ENCODE measurements at regions of chr15 and their contacts with region 1.

Region 1: DNA sequence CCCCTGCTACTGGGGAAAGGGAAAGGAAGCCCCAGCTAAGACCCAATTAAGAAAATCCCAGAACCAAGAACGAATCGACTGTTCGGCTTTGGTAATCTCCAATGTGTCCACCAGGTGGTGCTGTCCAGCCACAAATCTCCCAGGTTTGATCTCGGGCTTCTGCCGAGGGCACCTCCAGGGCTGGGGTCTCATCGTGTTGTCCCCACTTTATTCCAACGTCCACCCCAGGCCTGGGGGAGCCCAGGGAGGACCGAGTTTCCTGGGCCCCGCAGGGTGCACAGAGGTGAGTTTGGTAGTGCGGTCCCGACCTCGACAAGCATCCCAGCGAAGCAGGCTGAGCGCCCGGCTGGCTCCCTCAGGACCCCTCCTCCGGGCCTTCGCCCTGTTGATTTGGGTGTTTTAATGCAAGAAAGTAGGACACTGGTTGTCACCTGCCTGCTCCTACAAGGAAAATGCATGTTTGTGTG is 185.1 kb downstream of the GOLGA6L6 start:
- DNase-seq: peak; percentile 40
- H3K4me3 ChIP-seq: no peak overlapping the region
- H3K27ac ChIP-seq: no peak overlapping the region
- H3K4me1 ChIP-seq: peaks cover 0 to 3% (median 0%) of the 10 kb centered on the region in 4 donors
- H3K27me3 ChIP-seq: no peaks in the 10 kb centered on the region
- CTCF ChIP-seq: peak; percentile 63 to 73 (median 67)
- EP300 ChIP-seq: no peak
- POLR2A ChIP-seq: no peak

Region 2: GRCh38 chr15:20272422-20273184 is 83.9 kb before region 1 on chr15:
- in situ Hi-C with region 1: loop called in 1 of 4 experiments (anchors 25 kb)
- intact Hi-C with region 1: no loop called
- DNase-seq: no peak
- H3K4me3 ChIP-seq: no peak overlapping the region
- H3K27ac ChIP-seq: no peak overlapping the region
- H3K4me1 ChIP-seq: no peaks in the 10 kb centered on the region
- H3K27me3 ChIP-seq: no peaks in the 10 kb centered on the region
- CTCF ChIP-seq: no peak
- EP300 ChIP-seq: no peak
- POLR2A ChIP-seq: no peak

Region 3: GRCh38 chr15:22224241-22224671 is 1867.8 kb after region 1 on chr15:
- in situ Hi-C with region 1: loop called in 1 of 4 experiments (anchors 10 kb)
- intact Hi-C with region 1: no loop called
- DNase-seq: no peak
- H3K4me3 ChIP-seq: no peak overlapping the region
- H3K27ac ChIP-seq: no peak overlapping the region
- H3K4me1 ChIP-seq: no peaks in the 10 kb centered on the region
- H3K27me3 ChIP-seq: no peaks in the 10 kb centered on the region
- CTCF ChIP-seq: no peak
- EP300 ChIP-seq: no peak
- POLR2A ChIP-seq: no peak

Measured in transverse colon (tissue), 4 donors.